Right lobe of liver (tissue), 6 donors: ENCODE measurements at regions of chr11 and their contacts with region 1.

Region 1: GRCh38 chr11:8807544-8808225 is 103.3 kb upstream of the AKIP1 start:
- DNase-seq: no peak
- ATAC-seq: no peak
- H3K4me3 ChIP-seq: no peak overlapping the region
- H3K27ac ChIP-seq: peak overlapping the region in 1 of 3 donors; percentile 29
- H3K4me1 ChIP-seq: peaks cover 0 to 18% (median 0%) of the 10 kb centered on the region in 4 donors
- H3K27me3 ChIP-seq: no peaks in the 10 kb centered on the region
- CTCF ChIP-seq: no peak
- POLR2A ChIP-seq: no peak

Region 2: GRCh38 chr11:8156877-8157276 is 650.8 kb before region 1 on chr11:
- intact Hi-C with region 1: no loop called
- DNase-seq: no peak
- ATAC-seq: no peak
- H3K4me3 ChIP-seq: no peak overlapping the region
- H3K27ac ChIP-seq: no peak overlapping the region
- H3K4me1 ChIP-seq: no peaks in the 10 kb centered on the region
- H3K27me3 ChIP-seq: no peaks in the 10 kb centered on the region
- CTCF ChIP-seq: no peak
- POLR2A ChIP-seq: no peak

Region 3: GRCh38 chr11:8709002-8709672 is 98.5 kb before region 1 on chr11:
- intact Hi-C with region 1: loop called in 1 of 2 experiments (anchors 10 kb)
- DNase-seq: peak in 2 of 3 donors; percentile 61 to 77
- ATAC-seq: peak; percentile 72 to 95 (median 80)
- H3K4me3 ChIP-seq: no peak overlapping the region
- H3K27ac ChIP-seq: peak overlapping the region in 1 of 3 donors; percentile 20
- H3K4me1 ChIP-seq: peaks cover 0 to 20% (median 9%) of the 10 kb centered on the region in 4 donors
- H3K27me3 ChIP-seq: no peaks in the 10 kb centered on the region
- CTCF ChIP-seq: no peak
- POLR2A ChIP-seq: no peak